ENCODE measurements at regions of chr15 and their contacts with region 1.

Region 1: GRCh38 chr15:44738340-44738984 is 2.1 kb downstream of the TRIM69 start:
- DNase-seq: no peak
- ATAC-seq: no peak
- H3K4me3 Mint-ChIP-seq: peak overlapping the region; percentile 36
- H3K27ac Mint-ChIP-seq: peak overlapping the region; percentile 46
- H3K4me1 Mint-ChIP-seq: peaks cover 49% of the 10 kb centered on the region
- H3K27me3 Mint-ChIP-seq: no peaks in the 10 kb centered on the region

Region 2: DNA sequence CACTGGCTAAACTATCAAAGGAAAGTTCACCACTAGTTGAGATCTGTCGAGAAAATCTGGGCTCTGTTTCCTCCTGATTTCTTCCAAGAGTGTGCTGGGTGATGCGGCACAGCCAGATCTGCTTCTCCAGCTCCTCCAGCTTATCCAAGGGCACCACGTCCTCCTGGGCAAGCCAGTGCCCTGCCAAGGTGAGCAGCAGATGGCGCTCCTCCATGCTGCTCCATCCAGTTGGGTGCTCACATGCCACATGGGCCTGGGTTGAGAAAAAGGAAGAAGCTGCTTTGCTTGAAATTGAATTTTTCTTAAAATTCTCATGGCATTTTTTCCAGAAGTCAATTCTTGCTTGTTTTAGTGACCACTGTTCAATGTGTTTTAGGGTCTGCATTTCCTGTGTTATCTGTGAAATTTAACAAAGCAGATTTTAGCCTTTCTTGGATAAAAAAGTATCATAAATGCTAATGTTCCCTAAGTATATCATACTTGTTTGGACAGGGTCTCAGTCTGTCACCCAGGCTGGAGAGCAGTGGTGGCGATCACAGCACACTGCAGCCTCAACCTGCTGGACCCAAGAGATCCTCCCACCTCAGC is 154.2 kb before region 1 on chr15:
- CTCF ChIA-PET with region 1: interaction called, 78 read pairs
- DNase-seq: peak; percentile 73
- ATAC-seq: peak; percentile 86
- H3K4me3 Mint-ChIP-seq: no peak overlapping the region
- H3K27ac Mint-ChIP-seq: peak overlapping the region; percentile 49
- H3K4me1 Mint-ChIP-seq: peaks cover 4% of the 10 kb centered on the region
- H3K27me3 Mint-ChIP-seq: no peaks in the 10 kb centered on the region

Region 3: GRCh38 chr15:44598892-44599291 is 139.6 kb before region 1 on chr15:
- CTCF ChIA-PET with region 1: interaction called, 19 read pairs
- DNase-seq: no peak
- ATAC-seq: no peak
- H3K4me3 Mint-ChIP-seq: no peak overlapping the region
- H3K27ac Mint-ChIP-seq: peak overlapping the region; percentile 70
- H3K4me1 Mint-ChIP-seq: peaks cover 34% of the 10 kb centered on the region
- H3K27me3 Mint-ChIP-seq: no peaks in the 10 kb centered on the region

Region 4: GRCh38 chr15:44654858-44655257 is 83.6 kb before region 1 on chr15:
- CTCF ChIA-PET with region 1: interaction called, 14 read pairs
- DNase-seq: no peak
- ATAC-seq: no peak
- H3K4me3 Mint-ChIP-seq: no peak overlapping the region
- H3K27ac Mint-ChIP-seq: no peak overlapping the region
- H3K4me1 Mint-ChIP-seq: peaks cover 16% of the 10 kb centered on the region
- H3K27me3 Mint-ChIP-seq: no peaks in the 10 kb centered on the region

Region 5: DNA sequence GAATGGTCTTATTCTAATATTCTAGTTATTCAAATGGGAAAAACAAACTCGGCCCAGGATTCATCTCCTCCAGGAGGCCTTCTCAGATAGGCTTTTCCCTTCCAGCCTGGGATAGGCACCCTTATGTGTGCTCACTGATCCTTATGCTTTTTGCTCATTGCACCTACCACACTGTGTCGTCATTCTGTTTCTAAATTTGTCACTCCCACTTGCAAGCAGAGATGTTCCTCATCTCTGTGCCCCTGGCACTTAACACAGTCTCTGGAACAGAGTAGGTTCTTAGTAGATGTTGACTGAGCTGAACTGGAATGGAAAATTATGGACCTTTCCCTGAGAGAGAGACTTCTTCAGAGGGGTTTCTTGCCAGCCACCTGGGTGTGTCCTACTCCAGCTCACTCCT is 56.3 kb before region 1 on chr15:
- CTCF ChIA-PET with region 1: interaction called, 12 read pairs
- DNase-seq: no peak
- ATAC-seq: no peak
- H3K4me3 Mint-ChIP-seq: peak overlapping the region; percentile 60
- H3K27ac Mint-ChIP-seq: peak overlapping the region; percentile 87
- H3K4me1 Mint-ChIP-seq: peaks cover 83% of the 10 kb centered on the region
- H3K27me3 Mint-ChIP-seq: no peaks in the 10 kb centered on the region

Region 6: DNA sequence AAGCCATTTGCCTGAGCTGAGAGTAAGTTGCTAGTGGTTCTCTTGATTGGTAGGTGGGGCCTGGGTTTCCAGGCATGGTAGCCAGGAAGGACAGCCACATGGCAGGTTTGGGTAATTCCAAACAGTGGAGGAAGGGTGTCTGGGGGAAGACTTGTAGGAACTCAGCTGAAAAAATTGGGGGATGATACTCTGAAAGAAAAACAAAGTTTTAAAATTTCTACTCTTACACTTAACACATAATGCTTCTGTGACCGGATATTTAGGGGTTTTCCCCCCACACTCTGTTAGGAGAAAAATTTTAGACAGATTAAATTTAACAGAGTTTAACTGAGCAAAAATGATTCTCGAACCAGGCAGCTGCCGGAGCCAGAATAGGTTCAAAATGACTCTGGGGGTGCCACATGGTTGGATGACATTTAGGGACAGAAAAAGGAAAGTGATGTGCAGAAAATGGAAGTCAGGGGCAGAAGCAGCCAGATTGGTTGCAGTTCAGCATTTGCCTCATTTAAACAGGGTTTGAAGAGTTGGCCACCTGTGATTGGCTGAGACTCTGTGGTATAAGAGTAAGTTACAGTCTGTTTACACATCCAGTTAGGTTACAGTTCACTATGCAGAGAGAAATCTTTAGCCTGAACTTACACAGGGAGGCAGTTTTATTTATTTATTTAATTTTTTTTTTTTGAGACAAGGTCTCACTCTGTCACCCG is 19.0 kb before region 1 on chr15:
- CTCF ChIA-PET with region 1: interaction called, 95 read pairs
- DNase-seq: peak; percentile 88
- ATAC-seq: peak; percentile 65
- H3K4me3 Mint-ChIP-seq: peak overlapping the region; percentile 18
- H3K27ac Mint-ChIP-seq: peak overlapping the region; percentile 95
- H3K4me1 Mint-ChIP-seq: peaks cover 87% of the 10 kb centered on the region
- H3K27me3 Mint-ChIP-seq: no peaks in the 10 kb centered on the region